Esophagus muscularis mucosa (tissue), 4 donors: ENCODE measurements at regions of chr12 and their contacts with region 1.

Region 1: DNA sequence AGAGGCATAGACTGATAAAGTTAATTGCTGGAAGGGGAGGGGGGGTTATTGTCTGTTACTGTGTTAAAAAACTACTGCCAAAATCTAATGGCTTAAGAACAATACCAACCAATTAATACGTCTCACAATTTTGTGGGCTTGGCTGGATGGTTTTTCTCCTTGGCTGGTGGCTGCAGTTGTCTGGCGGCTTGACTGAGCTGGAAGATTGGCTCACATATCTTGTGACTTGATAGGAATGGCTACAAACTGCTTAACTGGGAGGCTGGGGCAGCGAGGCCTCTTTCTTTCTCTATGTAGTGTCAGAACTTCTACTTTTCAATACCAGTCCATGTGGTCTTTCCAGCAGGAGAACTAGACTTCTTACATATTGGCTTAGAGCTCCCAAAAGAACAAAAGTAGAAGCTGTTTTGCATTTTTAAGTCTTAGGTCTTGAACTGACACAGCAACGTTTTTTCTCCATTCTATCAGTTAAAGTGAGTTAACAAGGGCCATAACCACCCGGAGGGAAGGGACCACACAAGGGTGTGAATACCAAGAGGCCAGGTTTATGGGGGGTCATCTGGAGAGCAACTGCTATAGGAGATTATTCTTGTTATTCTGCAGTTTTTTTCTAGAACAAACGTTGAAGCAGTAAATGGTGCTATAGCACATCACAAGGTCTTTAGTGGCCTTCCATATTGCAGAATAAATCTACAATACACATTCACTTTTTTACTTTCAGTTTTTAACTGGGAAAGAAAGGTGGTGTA is 46.9 kb downstream of the ZDHHC17 start:
- DNase-seq: no peak
- H3K4me3 ChIP-seq: no peak overlapping the region
- H3K27ac ChIP-seq: no peak overlapping the region
- H3K4me1 ChIP-seq: no peaks in the 10 kb centered on the region
- H3K27me3 ChIP-seq: no peaks in the 10 kb centered on the region
- CTCF ChIP-seq: no peak
- EP300 ChIP-seq: no peak
- POLR2A ChIP-seq: no peak

Region 2: GRCh38 chr12:76763743-76764675 is 46.8 kb before region 1 on chr12 and contains the start of gene ZDHHC17:
- intact Hi-C with region 1: no loop called
- DNase-seq: peak; percentile 96
- H3K4me3 ChIP-seq: peak within 1 kb of the TSS; percentile 72 to 76 (median 74)
- H3K27ac ChIP-seq: peak within 1 kb of the TSS; percentile 90 to 98 (median 95)
- H3K4me1 ChIP-seq: peaks cover 40 to 50% (median 45%) of the 10 kb centered on the region in 4 donors
- H3K27me3 ChIP-seq: no peaks in the 10 kb centered on the region
- CTCF ChIP-seq: no peak
- EP300 ChIP-seq: no peak
- POLR2A ChIP-seq: peak; percentile 29
- total RNA-seq, gene ZDHHC17: 26.2 to 41.9 (median 38.0) TPM

Region 3: DNA sequence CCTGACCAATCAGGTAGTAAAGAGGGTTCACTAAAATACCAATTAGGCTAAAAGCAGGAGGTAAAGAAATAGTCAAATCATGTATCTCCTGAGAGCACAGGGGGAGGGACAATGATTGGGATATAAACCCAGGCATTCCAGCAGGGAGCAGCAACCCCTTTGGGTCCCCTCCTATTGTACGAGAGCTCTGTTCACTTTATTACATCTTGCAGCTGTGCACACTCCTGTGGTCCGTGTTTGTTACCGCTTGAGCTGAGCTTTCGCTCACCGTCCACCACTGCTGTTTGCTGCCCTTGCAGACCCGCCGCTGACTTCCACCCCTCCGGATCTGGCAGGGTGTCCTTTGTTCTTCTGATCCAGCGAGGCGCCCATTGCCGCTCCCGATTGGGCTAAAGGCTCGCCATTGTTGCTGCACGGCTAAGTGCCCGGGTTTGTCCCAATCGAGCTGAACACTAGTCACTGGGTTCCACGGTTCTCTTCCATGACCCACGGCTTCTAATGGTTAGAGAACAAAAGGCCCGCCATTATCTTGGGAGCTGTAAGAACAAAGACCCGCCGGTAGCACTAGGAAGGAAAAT is 190.4 kb after region 1 on chr12:
- intact Hi-C with region 1: loop called (anchors 10 kb)
- DNase-seq: peak; percentile 74
- H3K4me3 ChIP-seq: no peak overlapping the region
- H3K27ac ChIP-seq: no peak overlapping the region
- H3K4me1 ChIP-seq: no peaks in the 10 kb centered on the region
- H3K27me3 ChIP-seq: no peaks in the 10 kb centered on the region
- CTCF ChIP-seq: no peak
- EP300 ChIP-seq: no peak
- POLR2A ChIP-seq: no peak

Region 4: GRCh38 chr12:77710209-77710608 is 899.4 kb after region 1 on chr12:
- intact Hi-C with region 1: no loop called
- DNase-seq: no peak
- H3K4me3 ChIP-seq: no peak overlapping the region
- H3K27ac ChIP-seq: no peak overlapping the region
- H3K4me1 ChIP-seq: no peaks in the 10 kb centered on the region
- H3K27me3 ChIP-seq: no peaks in the 10 kb centered on the region
- CTCF ChIP-seq: no peak
- EP300 ChIP-seq: no peak
- POLR2A ChIP-seq: no peak